ENCODE measurements at regions of chrX and their contacts with region 1.

Region 1: GRCh38 chrX:150772150-150772970 is 79.2 kb downstream of the MTMR1 start:
- DNase-seq: peak; percentile 55 to 91 (median 84)

Region 2: DNA sequence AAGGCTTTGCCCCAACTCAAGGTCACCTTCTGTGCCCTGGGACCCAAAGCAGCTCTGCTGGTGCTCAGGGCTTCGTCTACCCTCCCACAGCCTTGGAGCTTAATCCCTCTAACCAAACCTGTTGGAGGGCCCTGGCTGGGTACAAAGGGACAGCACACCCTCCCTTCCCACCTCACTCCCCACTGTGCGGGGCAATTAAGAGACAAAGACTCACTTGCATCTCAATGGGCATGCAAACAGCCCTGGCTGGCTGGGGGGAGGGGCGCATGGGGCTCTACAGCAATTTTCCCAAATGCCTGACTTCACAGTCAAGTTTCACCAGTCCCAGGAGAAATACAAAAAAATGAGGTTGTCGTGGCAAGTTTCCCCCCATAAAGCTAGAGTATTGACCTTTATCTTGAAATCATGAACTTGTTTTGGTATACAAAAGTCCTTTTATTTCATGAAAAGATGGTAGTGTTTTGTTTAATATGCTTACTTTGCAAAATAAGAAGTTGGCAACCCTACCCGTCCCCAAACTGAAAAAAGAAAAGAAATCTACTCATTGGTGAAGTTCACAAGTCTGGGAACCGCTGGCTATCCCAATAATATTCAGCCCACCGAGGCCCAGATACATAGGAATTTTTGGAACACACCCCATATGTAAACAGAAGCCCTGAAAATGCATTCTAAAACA is 130.2 kb after region 1 on chrX:
- intact Hi-C with region 1: loop called (anchors 10 kb)
- DNase-seq: no peak

Region 3: DNA sequence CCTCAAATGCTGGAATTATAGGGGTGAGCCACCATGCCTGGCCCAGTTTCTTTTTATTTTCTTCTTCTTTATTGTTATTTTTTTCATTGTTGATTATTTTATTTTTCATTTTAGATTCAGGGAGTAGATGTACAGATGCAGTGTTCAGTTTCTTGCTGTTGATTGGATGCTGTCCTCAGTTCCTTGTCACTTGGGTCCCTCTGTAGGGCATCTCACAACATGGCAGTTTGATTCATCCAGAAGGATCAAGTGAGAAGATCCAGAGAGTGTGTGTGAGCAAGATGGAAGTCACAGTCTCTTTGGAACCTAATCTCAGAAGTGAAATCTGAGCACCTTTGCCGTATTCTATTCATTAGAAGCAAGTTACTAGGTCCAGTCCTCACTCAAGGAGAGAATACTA is 231.7 kb after region 1 on chrX:
- intact Hi-C with region 1: loop called (anchors 10 kb)
- DNase-seq: peak in 3 of 42 donors; percentile 2 to 23 (median 11)

Region 4: GRCh38 chrX:151082076-151082948 is 310.0 kb after region 1 on chrX:
- intact Hi-C with region 1: loop called (anchors 2 kb)
- DNase-seq: peak; percentile 50 to 85 (median 69)

Measured in head of caudate nucleus (tissue), 42 donors.